Left ventricle myocardium superior (tissue), 1 donor: ENCODE measurements at regions of chr9 and their contacts with region 1.

Region 1: GRCh38 chr9:104927912-104928740 is at the start of gene ABCA1:
- DNase-seq: peak; percentile 94
- ATAC-seq: peak; percentile 84
- total RNA-seq, gene ABCA1: 13.0 TPM

Region 2: DNA sequence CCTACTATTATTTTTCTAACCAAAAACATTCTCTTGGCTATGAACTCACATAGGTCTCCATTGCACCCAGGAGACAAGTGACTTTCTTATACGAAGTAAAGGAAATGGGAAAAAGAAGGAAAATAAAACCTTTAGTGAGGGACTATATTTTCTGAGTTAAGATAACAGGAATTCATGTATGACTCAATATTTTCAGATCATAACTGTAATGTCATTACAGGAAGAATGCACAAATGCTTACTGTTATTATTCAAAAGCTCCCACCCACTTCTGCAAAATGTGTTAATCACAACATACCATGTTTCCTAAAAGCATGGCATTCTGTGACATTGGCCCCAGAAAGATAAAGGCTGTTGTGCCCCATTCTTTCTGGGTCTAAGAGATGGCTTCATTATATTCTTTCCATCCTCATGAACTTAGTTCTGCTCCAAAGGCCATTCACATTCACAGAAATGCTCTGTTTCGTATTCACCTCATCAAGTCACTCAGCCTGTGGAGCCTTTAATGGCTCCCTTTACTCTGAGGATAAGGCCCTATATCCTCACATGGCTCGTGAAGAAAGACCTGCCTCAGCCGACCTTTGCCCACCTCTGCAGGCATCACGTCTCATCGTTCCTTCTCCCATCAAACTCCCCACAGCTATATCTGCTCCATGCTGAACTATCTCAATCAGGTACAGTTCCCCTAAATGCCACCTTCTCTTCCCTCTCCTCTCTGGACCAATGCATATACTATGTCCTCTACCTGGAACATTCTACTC is 77.2 kb before region 1 on chr9:
- intact Hi-C with region 1: no loop called
- DNase-seq: no peak
- ATAC-seq: peak; percentile 19

Region 3: GRCh38 chr9:104863180-104863883 is 64.8 kb before region 1 on chr9:
- intact Hi-C with region 1: loop called (anchors 10 kb)
- DNase-seq: no peak
- ATAC-seq: peak; percentile 74

Region 4: DNA sequence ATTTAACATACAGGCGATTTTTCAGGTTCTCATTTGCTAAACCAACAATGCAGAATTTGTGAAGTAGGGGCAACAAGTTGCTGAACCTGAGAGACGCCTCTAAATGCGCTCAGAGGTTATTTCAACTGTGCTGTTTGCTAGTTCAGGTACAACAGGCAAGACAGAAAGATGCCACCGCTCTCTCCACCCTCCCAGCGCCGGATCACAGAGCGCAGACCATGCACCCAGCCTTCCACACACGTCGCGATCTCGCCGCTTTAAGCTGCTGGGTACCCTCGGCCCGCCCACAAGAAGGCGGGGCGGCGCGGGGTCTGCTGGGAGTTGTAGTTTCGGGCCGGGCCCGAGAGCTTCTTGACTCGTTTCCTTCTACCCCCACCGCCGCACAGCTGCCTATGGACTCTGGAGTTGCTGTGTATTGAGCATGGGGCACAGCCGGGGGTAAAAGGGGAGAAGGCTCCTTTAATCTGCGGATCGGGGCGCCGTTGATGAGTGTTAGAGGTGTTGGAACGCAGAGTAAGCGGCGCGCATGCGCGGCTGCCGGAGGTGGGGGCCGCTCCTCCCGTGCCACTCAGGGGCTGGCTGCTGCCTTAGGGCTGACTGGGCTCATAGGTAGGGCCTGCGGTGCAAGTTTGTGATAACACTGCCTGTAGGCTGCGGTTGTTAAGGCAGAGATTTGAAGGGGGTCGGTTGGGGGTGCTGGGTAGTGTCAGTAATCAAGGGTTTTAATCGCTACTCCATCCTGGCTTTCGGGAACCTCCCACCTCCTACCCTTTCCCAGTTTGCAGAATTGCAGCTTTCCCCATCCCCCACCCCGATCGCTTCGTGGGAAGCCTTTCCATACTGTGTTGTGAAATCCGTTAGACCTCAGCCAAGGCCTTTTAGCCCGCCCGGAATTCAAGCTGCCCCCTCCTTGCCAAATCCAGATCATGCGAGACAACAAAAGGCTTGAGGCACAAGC is 40.2 kb after region 1 on chr9:
- intact Hi-C with region 1: loop called (anchors 2 kb)
- DNase-seq: peak; percentile 95
- ATAC-seq: peak; percentile 95

Region 5: DNA sequence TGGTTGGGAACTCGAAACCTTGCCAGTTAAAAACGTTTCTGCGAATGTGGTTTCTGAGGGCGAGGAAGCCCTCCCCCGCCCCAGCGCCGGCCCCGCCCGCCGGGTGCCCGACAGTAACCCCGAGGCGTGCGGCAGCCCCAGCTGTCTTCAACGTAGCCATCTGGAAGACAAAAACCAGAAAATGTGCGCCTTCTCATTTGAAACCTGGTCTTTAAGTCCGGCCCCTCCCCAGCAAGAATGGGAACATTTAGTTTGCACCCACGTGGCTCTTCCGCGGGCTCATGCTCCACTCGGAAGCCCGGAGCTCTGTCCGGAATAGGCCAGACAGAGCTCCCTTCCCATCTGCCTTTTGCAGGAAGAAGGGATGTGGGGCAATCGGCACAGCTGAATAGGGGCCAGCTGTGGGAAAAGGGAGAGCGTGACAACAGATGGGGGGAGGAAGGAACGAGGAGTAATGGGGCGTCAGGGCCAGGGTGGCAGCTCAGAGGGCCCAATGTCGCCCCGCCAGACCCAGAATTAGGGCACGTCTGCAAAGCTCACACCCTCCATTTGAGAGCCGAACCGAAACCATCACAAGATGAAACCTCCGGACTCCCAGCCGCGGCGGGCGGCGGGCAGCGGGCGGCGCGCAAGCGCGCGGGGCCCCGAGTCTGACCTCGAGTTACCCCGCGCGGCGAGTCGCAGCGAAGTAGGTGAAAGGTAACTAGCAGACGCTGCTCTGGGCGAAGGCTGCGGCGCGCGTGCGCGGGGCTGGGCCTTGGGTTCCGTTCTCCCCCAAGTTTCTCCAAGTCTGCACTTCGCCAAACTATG is 63.2 kb after region 1 on chr9:
- intact Hi-C with region 1: loop called (anchors 10 kb)
- DNase-seq: peak; percentile 96
- ATAC-seq: peak; percentile 86

Region 6: GRCh38 chr9:105007143-105007542 is 79.0 kb after region 1 on chr9:
- intact Hi-C with region 1: no loop called
- DNase-seq: no peak
- ATAC-seq: peak; percentile 76

Region 7: GRCh38 chr9:105157130-105157583 is 229.0 kb after region 1 on chr9:
- intact Hi-C with region 1: loop called (anchors 10 kb)
- DNase-seq: peak; percentile 65
- ATAC-seq: peak; percentile 92

Region 8: GRCh38 chr9:105967798-105968197 is 1039.7 kb after region 1 on chr9:
- intact Hi-C with region 1: no loop called
- DNase-seq: no peak
- ATAC-seq: no peak